Ascending aorta (tissue), 2 donors: ENCODE measurements at regions of chr1 and their contacts with region 1.

Region 1: GRCh38 chr1:36420836-36421664 is 23.3 kb upstream of the LSM10 start:
- DNase-seq: peak; percentile 58 to 94
- H3K4me3 ChIP-seq: no peak overlapping the region
- H3K27ac ChIP-seq: peak overlapping the region; percentile 1 to 24
- H3K4me1 ChIP-seq: no peaks in the 10 kb centered on the region
- H3K27me3 ChIP-seq: no peaks in the 10 kb centered on the region
- CTCF ChIP-seq: peak; percentile 86 to 94 (median 92)

Region 2: GRCh38 chr1:36134505-36135329 is 286.3 kb before region 1 on chr1:
- intact Hi-C with region 1: no loop called
- DNase-seq: peak in 1 of 2 donors; percentile 81
- H3K4me3 ChIP-seq: no peak overlapping the region
- H3K27ac ChIP-seq: peak overlapping the region; percentile 85 to 91
- H3K4me1 ChIP-seq: peaks cover 8 to 28% of the 10 kb centered on the region in 2 donors
- H3K27me3 ChIP-seq: no peaks in the 10 kb centered on the region
- CTCF ChIP-seq: peak; percentile 75 to 85 (median 77)

Region 3: GRCh38 chr1:36342481-36343478 is 78.3 kb before region 1 on chr1:
- intact Hi-C with region 1: loop called (anchors 1 kb)
- DNase-seq: peak in 1 of 2 donors; percentile 89
- H3K4me3 ChIP-seq: no peak overlapping the region
- H3K27ac ChIP-seq: peak overlapping the region; percentile 92 to 95
- H3K4me1 ChIP-seq: peaks cover 4 to 12% of the 10 kb centered on the region in 2 donors
- H3K27me3 ChIP-seq: no peaks in the 10 kb centered on the region
- CTCF ChIP-seq: peak; percentile 76 to 89 (median 83)